ENCODE measurements at regions of chr3 and their contacts with region 1.

Region 1: DNA sequence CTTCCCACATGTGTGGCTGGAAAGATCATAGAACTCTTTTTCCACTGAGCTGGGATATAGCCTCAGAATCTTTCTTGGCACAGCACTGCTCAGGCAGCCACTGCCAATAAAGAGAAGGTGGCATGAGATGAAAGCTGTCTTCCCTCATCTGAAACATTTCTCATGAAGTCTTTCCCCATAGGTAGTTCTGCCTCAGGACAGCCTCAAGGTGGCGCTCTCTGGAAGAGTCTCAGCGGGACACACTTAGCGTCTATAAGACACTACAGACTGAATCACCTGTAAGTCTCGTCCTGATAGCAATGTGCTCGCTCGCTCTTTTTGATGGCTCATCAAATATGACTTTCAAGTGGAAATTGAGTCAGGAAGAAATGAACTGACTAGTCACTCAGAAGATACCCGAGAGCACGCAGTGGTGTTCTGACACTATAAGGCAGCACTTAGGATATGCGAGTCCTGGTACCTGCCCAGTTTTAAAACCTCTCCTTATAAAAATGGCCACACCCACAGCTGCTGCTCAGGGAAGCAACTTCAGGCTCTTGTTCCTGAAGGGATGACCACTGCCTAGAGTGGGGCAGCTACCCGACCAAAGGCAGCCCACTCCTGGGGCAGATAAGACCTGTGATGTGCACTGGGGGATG is 269.5 kb downstream of the SUCLG2 start:
- DNase-seq: peak; percentile 17
- H3K4me3 ChIP-seq: no peak overlapping the region
- H3K27ac ChIP-seq: no peak overlapping the region
- H3K4me1 ChIP-seq: no peaks in the 10 kb centered on the region
- H3K27me3 ChIP-seq: no peaks in the 10 kb centered on the region
- CTCF ChIP-seq: peak; percentile 60 to 63

Region 2: GRCh38 chr3:67605377-67605776 is 220.5 kb after region 1 on chr3:
- CTCF ChIA-PET with region 1: no interaction called
- dilution Hi-C with region 1: no loop called
- in situ Hi-C with region 1: no loop called
- intact Hi-C with region 1: loop called (anchors 1 kb)
- DNase-seq: peak; percentile 42
- H3K4me3 ChIP-seq: no peak overlapping the region
- H3K27ac ChIP-seq: no peak overlapping the region
- H3K4me1 ChIP-seq: peaks cover 4% of the 10 kb centered on the region
- H3K27me3 ChIP-seq: no peaks in the 10 kb centered on the region
- CTCF ChIP-seq: peak; percentile 16 to 31

Region 3: GRCh38 chr3:67790043-67790442 is 405.2 kb after region 1 on chr3:
- CTCF ChIA-PET with region 1: no interaction called
- dilution Hi-C with region 1: no loop called
- in situ Hi-C with region 1: no loop called
- intact Hi-C with region 1: loop called (anchors 1 kb)
- DNase-seq: peak; percentile 30
- H3K4me3 ChIP-seq: no peak overlapping the region
- H3K27ac ChIP-seq: no peak overlapping the region
- H3K4me1 ChIP-seq: no peaks in the 10 kb centered on the region
- H3K27me3 ChIP-seq: no peaks in the 10 kb centered on the region
- CTCF ChIP-seq: peak; percentile 41 to 71

Measured in mammary epithelial cell (primary cell).